Activated CD4-positive, alpha-beta memory T cell treated with anti-CD3 and anti-CD28 coated beads, Interleukin-2, amount 10 ng/mL, durations not matched to agents 7 days and 5 days (primary cell): ENCODE measurements at regions of chr7 and their contacts with region 1.

Region 1: DNA sequence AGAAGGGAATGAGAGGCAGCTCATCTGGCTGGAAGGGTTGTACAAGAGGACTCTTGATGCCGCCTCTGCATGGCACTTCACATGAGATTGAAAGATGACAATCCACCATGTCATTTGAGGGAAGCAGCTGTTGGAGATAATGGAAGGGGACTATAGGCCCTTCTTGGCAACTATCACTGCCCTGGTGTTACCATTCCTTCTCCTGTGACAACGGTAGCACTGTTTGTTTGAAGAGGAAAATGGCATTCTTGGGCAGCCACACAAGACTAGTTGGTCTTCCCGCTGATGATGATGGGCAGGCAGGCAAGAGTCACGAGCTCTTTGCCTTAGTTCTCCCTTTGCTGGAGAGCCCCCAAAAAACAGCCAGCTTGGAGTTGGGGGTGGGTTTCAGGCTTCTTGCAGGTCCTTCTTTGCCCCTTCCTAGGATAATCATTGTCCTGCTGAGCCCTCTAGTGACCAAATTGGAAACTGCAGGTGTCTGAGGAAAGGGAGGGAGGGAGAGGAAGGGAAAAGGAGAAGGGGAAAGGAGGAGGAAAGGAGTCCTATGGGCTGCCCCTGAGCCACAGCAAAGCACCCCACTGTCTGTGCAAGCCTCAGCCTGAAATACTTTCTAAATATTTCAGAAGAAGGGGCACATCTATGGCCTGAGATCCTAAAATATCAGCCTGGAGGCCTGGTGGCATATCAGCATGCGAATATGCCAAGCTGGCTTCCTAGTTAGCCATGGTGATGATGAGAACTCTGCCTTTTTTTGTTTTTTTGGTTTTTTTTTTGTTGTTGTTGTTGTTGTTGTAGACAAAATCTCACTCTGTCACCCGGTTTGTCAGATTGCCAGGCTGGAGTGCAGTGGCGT is 165.6 kb upstream of the KMT2E start:
- DNase-seq: peak; percentile 45
- H3K4me3 Mint-ChIP-seq: no peak overlapping the region
- H3K27ac Mint-ChIP-seq: no peak overlapping the region
- H3K4me1 Mint-ChIP-seq: no peaks in the 10 kb centered on the region
- H3K27me3 Mint-ChIP-seq: peaks cover 10% of the 10 kb centered on the region

Region 2: DNA sequence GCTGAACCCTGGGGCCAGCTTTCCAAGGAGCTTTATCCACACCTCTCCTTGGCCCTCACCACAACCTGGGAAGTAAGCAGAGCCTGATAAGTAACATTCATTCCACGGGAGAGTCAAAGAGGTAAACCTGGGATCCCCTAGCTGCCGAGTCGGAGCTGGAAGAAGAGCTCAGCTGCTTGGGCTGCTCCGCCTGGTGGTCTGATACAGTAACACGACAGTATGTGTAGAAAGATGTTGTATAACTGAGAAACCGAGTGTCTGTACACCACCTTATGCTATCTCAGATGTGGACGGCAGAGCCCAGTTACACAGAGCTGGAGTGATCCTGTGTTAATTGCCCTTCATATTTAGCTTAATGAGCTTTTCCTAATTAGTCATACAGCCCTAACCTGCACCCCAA is 14.4 kb after region 1 on chr7:
- CTCF ChIA-PET with region 1: interaction called, 10 read pairs
- POLR2A ChIA-PET with region 1: no interaction called
- DNase-seq: no peak
- H3K4me3 Mint-ChIP-seq: no peak overlapping the region
- H3K27ac Mint-ChIP-seq: no peak overlapping the region
- H3K4me1 Mint-ChIP-seq: peaks cover 10% of the 10 kb centered on the region
- H3K27me3 Mint-ChIP-seq: peaks cover 29% of the 10 kb centered on the region